Right cardiac atrium (tissue), 5 donors: ENCODE measurements at regions of chr17 and their contacts with region 1.

Region 1: GRCh38 chr17:40019140-40019991 is 4.1 kb downstream of the CSF3 start:
- DNase-seq: peak; percentile 38 to 71 (median 65)
- ATAC-seq: no peak
- H3K4me3 ChIP-seq: no peak overlapping the region
- H3K27ac ChIP-seq: no peak overlapping the region
- H3K4me1 ChIP-seq: peaks cover 10% of the 10 kb centered on the region
- H3K27me3 ChIP-seq: no peaks in the 10 kb centered on the region

Region 2: GRCh38 chr17:39889200-39889599 is 130.2 kb before region 1 on chr17:
- intact Hi-C with region 1: no loop called
- DNase-seq: no peak
- ATAC-seq: no peak
- H3K4me3 ChIP-seq: no peak overlapping the region
- H3K27ac ChIP-seq: no peak overlapping the region
- H3K4me1 ChIP-seq: no peaks in the 10 kb centered on the region
- H3K27me3 ChIP-seq: peaks cover 2% of the 10 kb centered on the region

Region 3: DNA sequence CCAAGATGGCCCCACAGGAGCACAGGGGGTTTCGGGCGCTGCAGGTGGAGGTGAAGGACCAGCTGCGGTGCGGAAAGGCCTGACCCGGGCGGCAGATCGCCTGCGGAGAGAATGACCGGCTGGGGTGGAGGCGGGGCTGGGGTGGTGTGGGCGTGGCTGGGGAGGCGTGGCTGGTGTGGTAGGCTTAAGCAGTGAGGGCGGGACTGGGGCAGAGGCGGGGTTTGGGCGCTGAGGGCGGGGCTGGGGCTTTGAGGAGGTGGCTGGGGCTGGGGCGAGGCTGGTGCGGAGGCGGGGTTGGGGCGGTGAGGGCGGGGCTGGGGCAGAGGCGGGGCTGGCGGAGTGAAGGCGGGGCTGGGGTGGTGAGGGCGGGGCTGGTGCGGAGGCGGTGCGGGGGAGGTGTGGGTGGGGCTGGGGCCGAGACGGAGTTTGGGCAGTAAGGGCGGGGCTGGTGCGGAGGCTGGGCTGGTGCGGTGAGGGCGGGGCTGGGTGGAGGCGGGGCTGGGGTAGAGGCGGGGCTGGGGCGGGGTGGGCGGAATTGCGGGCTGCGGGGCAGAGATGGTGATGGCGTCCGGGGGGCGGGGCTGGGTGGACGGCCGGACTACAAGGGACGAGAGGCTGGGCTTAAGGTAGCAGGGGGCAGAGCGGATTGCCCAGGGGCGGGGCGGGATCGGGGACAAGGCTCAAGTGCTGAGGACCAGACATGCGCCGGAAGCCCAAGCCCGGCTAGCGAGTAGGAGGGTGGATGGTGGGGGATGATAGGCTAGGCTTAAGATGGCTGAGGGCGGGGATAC is 66.5 kb before region 1 on chr17:
- intact Hi-C with region 1: loop called in 1 of 4 experiments (anchors 10 kb)
- DNase-seq: peak; percentile 98 to 99 (median 99)
- ATAC-seq: peak; percentile 96
- H3K4me3 ChIP-seq: peak overlapping the region; percentile 11
- H3K27ac ChIP-seq: peak overlapping the region; percentile 1
- H3K4me1 ChIP-seq: no peaks in the 10 kb centered on the region
- H3K27me3 ChIP-seq: no peaks in the 10 kb centered on the region

Region 4: DNA sequence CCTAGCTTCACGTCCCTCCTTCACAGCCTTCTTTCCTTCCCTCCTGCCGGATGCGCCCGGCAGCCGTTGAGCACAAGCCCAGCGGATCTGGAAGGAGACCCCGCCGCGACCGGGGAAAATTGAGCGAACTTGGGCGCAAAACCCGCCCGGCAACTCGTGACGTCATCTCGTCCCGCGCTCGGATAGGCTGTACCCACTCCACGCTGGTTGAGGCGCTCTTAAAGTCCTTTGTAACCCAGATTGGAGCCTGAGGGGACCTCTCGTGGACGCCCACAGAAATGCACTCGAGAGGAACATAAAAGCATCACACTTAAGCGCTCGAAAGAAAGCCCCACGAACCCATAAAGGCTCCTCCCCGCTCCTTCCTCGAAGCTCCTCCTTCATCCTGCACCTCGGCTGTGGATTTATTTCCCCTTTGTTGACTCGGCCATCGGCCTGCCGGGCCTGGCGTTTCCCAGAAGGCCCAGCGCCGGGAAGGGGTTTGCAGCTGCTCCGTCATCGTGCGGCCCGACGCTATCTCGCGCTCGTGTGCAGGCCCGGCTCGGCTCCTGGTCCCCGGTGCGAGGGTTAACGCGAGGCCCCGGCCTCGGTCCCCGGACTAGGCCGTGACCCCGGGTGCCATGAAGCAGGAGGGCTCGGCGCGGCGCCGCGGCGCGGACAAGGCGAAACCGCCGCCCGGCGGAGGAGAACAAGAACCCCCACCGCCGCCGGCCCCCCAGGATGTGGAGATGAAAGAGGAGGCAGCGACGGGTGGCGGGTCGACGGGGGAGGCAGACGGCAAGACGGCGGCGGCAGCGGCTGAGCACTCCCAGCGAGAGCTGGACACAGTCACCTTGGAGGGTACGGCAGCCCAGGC is 38.8 kb before region 1 on chr17 and contains the start of gene PSMD3:
- intact Hi-C with region 1: no loop called
- DNase-seq: peak; percentile 97 to 99 (median 98)
- ATAC-seq: peak; percentile 97
- H3K4me3 ChIP-seq: peak within 1 kb of the TSS; percentile 81
- H3K27ac ChIP-seq: peak within 1 kb of the TSS; percentile 83
- H3K4me1 ChIP-seq: no peaks in the 10 kb centered on the region
- H3K27me3 ChIP-seq: no peaks in the 10 kb centered on the region
- total RNA-seq, gene PSMD3: 80.0 to 83.1 (median 81.1) TPM

Region 5: DNA sequence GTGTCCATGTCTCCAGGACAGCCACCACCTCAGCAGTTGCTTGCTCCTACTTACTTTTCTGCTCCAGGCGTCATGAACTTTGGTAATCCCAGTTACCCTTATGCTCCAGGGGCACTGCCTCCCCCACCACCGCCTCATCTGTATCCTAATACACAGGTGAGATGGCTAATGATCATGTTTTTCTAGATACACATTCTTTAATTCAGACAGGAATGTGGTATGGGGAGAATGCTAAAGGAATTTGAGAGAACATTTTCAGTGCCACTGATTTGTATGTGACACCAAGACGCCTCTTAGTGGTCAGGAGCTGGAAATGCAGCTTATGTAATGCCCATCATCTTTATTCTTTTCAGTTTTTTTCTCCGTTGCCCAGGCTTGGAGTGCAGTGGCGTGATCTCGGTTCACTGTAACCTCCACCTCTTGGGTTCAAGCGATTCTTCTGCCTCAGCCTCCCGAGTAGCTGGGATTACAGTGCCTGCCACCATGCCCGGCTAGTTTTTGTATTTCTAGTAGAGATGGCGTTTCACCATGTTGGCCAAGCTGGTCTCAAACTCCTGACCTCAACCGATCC is 149.0 kb after region 1 on chr17:
- intact Hi-C with region 1: loop called in 2 of 4 experiments (anchors 5 to 10 kb)
- DNase-seq: no peak
- ATAC-seq: peak; percentile 54 to 64
- H3K4me3 ChIP-seq: no peak overlapping the region
- H3K27ac ChIP-seq: peak overlapping the region; percentile 64
- H3K4me1 ChIP-seq: no peaks in the 10 kb centered on the region
- H3K27me3 ChIP-seq: no peaks in the 10 kb centered on the region

Region 6: DNA sequence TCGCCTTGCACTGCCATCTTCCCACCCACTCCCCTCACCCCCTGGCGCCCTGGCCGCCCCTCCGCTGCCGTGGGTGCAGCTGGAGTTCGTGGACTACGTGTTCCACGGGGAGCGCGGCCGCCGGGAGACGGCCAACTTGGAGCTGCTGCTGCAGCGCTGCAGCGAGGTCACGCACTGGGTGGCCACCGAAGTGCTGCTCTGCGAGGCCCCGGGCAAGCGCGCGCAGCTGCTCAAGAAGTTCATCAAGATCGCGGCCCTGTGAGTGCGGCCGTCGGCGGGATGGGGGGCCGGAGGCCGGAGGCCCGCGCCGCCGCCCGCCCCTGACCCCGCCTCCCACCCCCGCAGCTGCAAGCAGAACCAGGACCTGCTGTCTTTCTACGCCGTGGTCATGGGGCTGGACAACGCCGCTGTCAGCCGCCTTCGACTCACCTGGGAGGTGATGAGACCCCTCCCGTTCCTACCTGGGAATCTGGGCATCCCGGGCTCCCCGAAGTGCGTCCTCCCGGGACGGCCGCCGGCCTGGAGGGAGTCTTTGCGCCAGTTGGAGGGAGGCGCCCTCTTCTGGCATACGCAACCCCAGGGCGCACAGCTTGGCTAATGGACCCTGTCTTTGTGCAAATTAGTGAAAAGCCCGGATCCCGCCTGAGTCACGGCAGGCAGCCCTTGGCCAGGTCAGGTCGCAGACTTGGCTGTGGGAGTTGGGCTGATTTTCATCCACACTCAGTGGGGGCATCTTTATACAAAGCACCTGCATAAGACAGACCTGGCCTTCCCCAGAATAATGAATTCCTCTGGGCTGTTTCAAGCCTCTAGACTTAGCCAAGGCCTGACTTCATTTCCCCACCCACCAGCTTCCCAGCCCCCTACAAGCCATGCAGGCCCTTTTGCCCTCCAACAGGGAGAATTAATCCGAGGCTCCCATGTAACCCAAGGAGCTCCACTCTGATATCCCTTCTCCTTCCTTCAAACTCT is 172.2 kb after region 1 on chr17:
- intact Hi-C with region 1: loop called in 2 of 4 experiments (anchors 10 kb)
- DNase-seq: peak; percentile 76 to 92 (median 90)
- ATAC-seq: peak; percentile 85 to 86
- H3K4me3 ChIP-seq: peak overlapping the region; percentile 39
- H3K27ac ChIP-seq: no peak overlapping the region
- H3K4me1 ChIP-seq: no peaks in the 10 kb centered on the region
- H3K27me3 ChIP-seq: no peaks in the 10 kb centered on the region